Sigmoid colon (tissue), 7 donors: ENCODE measurements at regions of chr10 and their contacts with region 1.

Region 1: DNA sequence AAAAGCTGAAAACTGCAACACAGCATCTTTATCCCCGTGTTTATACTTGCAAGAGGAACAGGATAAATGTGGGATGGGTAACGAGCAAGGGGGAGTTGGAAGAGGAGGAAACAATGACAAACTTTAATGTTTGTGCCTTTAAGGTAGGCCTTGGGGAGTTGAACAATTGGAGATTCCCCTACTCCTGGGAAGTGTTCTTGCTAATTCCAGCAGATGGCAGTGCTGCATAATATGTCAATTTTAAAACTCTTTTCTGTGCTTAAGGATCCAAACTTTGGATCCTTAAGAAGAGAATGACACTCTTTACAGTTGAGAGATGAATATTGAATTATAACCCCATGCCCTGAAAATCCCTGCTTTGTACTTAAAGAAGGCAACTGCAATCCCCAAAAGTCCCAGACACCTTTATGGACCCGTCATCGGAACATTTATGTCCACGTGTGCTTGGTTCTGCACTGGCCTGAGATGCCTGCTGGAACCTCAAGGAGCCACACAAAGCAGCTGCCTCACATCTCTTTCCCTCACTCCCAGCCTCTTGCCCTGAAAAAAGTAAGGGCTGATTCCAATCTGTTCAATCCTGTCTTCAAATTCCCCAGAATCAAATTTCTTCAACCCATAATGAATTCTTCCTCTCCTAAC is 12.0 kb downstream of the IFIT5 start:
- DNase-seq: no peak
- H3K4me3 ChIP-seq: no peak overlapping the region
- H3K27ac ChIP-seq: no peak overlapping the region
- H3K4me1 ChIP-seq: no peaks in the 10 kb centered on the region
- H3K27me3 ChIP-seq: no peaks in the 10 kb centered on the region
- CTCF ChIP-seq: peak; percentile 63 to 85 (median 77)
- EP300 ChIP-seq: no peak
- POLR2A ChIP-seq: no peak

Region 2: GRCh38 chr10:89563861-89564478 is 137.6 kb after region 1 on chr10:
- intact Hi-C with region 1: loop called (anchors 1 kb)
- DNase-seq: no peak
- H3K4me3 ChIP-seq: no peak overlapping the region
- H3K27ac ChIP-seq: no peak overlapping the region
- H3K4me1 ChIP-seq: no peaks in the 10 kb centered on the region
- H3K27me3 ChIP-seq: no peaks in the 10 kb centered on the region
- CTCF ChIP-seq: peak; percentile 58 to 81 (median 69)
- EP300 ChIP-seq: no peak
- POLR2A ChIP-seq: no peak